ENCODE measurements at regions of chr20 and their contacts with region 1.

Region 1: GRCh38 chr20:35303735-35304491 is 11.7 kb upstream of the FAM83C start:
- DNase-seq: peak; percentile 81
- ATAC-seq: peak; percentile 50

Region 2: GRCh38 chr20:35104685-35105295 is 199.1 kb before region 1 on chr20:
- intact Hi-C with region 1: no loop called
- DNase-seq: no peak
- ATAC-seq: no peak

Region 3: DNA sequence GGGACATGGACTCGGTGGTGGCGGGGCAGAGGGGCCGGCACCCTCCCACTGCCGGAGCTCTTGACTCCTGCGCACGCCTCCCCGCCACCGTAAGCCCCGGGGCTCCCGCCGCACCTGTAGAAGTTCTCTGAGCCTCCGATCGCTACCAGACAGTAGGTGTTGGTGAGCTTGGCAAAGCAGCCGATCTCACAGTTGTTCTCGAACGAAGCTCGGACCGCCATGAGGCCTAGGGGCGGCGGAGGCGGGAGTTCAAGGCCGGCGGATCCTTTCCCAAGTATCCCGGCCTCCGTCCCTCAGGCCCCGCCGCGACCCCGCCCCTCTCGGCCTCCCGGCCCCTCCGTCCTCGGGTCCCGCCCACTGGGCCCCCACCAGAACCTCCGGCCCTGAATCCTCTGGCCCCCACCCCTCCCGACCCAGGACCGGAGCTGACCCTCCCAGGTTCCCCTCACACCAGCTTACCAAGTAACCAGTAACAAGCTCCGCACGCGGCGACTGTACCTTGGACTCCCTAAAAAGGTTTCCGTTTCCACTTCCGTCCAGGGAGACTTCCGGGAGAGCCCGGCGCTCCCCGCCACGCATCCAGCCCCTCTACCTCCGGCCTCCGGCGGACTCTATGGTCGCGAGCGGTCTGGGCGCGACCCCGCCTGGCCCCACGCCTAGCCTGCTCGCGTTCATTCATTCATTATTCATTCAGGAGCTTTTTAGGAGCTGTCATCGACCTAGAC is 19.5 kb before region 1 on chr20 and contains the start of gene EIF6:
- intact Hi-C with region 1: no loop called
- DNase-seq: peak; percentile 91
- ATAC-seq: peak; percentile 90
- total RNA-seq, gene EIF6: 36.5 TPM

Region 4: GRCh38 chr20:35434067-35435005 is 130.4 kb after region 1 on chr20:
- intact Hi-C with region 1: loop called (anchors 5 kb)
- DNase-seq: peak; percentile 81
- ATAC-seq: peak; percentile 64

Region 5: GRCh38 chr20:35447082-35447789 is 143.3 kb after region 1 on chr20:
- intact Hi-C with region 1: loop called (anchors 2 kb)
- DNase-seq: peak; percentile 91
- ATAC-seq: peak; percentile 73

Measured in Right ventricle myocardium inferior (tissue), 1 donor.